ENCODE measurements at regions of chr2 and their contacts with region 1.

Region 1: DNA sequence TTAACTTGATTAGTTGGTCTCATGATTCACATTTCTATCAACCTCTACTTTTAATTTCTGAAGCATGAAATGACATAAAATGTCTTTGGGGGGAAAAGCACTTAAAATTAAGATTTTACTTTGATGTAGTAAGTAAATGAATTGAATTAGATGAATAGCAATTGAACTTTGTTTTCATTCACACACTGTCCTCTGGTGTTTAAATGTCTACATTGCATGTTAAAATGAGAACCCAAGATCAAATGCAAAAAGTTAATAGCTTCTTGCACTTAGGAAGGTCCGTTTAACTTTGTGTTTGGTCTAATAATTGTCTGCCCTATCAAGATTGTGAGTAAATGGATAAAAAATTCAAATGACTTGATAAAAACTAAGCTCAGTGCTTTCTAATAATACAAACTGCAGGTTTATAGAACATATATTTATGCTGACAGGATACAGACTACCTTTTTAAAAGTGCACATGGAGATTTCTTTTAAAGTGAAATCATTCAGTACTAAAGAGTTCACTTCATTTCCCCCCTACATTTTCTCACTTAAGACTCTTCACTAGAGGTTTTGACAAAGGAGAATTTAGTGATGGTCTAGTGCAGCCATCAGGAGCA is 156.2 kb upstream of the NABP1 start:
- H3K4me3 Mint-ChIP-seq: no peak overlapping the region
- H3K27ac Mint-ChIP-seq: no peak overlapping the region
- H3K4me1 Mint-ChIP-seq: no peaks in the 10 kb centered on the region
- H3K27me3 Mint-ChIP-seq: no peaks in the 10 kb centered on the region

Region 2: DNA sequence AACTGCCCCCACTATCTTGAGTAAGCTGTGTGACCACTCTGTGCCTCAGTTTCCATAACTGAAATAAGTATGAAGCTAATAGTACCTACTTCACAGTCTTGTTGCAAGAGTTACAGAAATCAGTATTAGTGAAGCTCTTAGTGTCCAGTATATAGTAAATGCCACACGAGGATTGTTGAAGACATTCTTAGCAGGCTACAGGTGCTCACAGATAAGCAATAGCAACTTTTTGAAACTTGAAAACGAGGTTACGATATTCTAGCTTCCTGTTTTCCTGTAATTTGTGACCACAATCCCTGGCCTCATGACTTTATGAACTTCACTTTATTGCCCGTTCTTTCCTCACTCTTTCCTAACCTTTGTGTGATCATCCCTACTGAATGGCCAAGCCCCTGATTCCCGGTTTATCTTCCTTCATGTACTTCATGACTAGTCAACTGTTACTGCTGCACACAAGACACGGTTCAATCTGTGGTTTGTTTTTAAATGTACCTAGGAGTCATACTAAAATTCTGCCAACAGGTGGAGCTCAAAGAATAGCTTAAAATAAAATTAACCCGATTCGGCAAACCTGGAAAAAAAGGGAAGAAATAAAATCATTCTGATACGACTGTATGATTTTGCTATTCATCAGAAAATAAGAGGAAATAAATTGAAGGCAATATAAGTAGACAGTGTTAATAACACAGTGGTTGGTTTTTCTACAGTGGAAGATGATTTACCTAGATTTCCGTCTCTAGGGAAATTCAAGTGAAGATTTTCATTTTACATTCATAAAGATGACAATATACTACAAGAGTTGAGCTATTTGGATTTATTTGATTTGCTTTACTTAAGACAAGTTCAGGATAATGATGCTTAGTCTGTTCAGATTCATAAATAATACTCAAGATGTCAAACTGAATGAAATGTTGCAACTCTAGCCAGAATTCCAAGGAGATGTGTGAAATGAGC is 469.6 kb before region 1 on chr2:
- intact Hi-C with region 1: loop called (anchors 10 kb)
- H3K4me3 Mint-ChIP-seq: no peak overlapping the region
- H3K27ac Mint-ChIP-seq: no peak overlapping the region
- H3K4me1 Mint-ChIP-seq: peaks cover 10% of the 10 kb centered on the region
- H3K27me3 Mint-ChIP-seq: peaks cover 7% of the 10 kb centered on the region

Region 3: GRCh38 chr2:191165176-191165643 is 356.5 kb before region 1 on chr2:
- intact Hi-C with region 1: loop called (anchors 2 kb)
- H3K4me3 Mint-ChIP-seq: no peak overlapping the region
- H3K27ac Mint-ChIP-seq: no peak overlapping the region
- H3K4me1 Mint-ChIP-seq: no peaks in the 10 kb centered on the region
- H3K27me3 Mint-ChIP-seq: no peaks in the 10 kb centered on the region

Region 4: DNA sequence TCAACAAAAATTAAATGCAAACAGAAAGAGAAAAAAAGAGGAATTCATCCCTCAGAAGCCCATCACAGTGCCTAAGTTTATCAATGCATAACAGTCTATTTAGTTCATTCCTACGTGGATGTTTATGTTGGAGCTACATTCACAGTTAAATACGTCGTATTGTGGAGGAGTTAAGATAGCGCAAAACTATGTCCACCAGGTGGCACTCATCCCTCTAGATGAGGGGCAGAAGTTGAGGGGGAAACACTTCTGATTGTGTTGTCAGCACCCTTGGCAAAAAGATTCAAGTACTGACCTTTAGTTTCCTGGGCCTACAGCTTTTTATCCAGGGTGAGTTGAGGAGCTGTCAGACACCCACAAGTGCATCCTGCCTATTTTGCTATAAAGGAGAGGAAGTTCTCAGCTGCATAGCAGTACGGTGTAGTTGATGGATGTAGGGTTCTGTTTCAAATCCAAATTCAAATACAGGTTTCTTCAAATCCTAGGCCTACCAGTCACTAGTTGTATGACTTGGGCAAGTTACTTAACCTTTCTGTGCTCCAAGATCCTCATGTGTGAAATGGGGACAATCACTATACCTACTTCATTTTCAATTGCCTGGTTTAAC is 303.3 kb before region 1 on chr2:
- intact Hi-C with region 1: loop called (anchors 5 kb)
- H3K4me3 Mint-ChIP-seq: no peak overlapping the region
- H3K27ac Mint-ChIP-seq: no peak overlapping the region
- H3K4me1 Mint-ChIP-seq: peaks cover 4% of the 10 kb centered on the region
- H3K27me3 Mint-ChIP-seq: no peaks in the 10 kb centered on the region

Region 5: DNA sequence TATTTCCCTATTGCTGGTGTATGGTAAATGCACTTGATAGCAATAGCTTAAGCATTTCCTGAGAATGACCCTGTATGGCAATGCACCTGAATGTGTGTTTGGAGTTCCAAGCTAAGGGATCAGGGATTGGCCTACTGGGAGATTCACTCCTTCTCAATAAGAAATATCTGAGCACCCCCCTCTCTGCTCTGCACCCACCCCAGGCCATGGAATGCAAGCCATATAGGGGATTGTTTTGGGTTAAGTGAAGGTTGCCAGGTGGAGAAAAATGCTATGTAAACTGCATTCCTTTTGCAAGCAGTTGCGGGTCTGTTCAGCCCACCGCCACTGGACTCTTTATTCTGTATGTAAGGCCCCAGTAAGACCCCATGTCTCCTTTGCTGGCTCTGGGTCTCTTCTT is 70.2 kb after region 1 on chr2:
- intact Hi-C with region 1: no loop called
- H3K4me3 Mint-ChIP-seq: no peak overlapping the region
- H3K27ac Mint-ChIP-seq: no peak overlapping the region
- H3K4me1 Mint-ChIP-seq: peaks cover 5% of the 10 kb centered on the region
- H3K27me3 Mint-ChIP-seq: no peaks in the 10 kb centered on the region

Measured in dendritic cell treated with granulocyte-macrophage colony-stimulating factor and Interleukin-4, amounts not matched to agents 40 ng/mL and 50 ng/mL, for 4 days (primary cell).